ENCODE measurements at regions of chr11 and their contacts with region 1.

Region 1: DNA sequence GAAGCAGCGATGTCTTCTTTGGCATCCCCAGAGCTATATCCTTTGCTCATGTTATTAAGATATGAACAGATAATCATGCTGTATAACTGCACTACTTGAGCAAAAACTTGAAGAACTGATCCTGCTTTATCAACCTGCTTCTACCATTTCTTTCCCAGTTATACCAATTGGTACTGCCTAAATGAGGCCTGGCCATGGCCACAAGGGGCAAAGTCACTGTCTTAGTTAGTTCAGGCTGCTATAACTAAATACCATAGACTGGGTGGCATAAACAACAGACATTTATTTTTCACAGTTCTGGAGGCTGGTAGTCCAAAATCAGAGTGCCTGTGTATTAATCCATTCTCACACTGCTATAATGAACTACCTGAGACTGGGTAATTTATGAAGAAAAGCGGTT is 37.5 kb downstream of the DEUP1 start:
- DNase-seq: no peak

Region 2: DNA sequence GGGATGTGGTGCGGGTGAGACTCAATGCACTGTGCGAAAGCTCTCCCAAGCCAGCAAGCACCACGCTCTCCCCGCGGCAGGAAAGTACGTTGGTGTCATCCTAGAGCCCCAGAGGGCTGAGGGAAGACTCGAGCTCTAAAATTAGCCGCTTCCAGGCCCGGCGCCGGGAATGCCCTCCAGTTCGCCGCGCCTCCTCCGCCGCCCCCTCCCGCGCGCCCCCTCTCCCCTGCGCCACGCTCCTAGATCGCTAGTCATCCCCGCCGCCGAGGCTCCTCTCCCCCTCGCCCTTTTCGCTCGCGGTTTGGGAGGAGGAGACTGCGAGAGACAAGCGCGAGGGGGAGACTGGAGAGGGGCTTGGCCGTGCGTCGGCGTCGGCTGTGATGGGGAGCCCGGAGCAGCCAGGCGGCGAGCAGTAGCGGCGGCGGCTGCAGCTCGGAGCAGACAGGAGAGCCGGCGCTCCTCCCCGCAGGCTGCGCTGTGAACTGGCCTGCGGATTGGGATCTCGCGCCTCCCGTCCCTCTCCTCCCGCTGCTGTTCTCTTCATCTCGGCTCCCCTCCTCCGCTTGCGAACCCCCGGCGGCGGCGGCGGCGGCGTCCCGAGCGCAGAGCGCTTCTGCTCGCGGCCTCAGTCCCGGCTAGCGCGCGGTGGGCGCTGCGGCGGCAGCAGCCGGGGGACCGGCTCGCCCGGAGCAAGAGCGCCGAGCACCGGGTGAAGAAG is 1143.5 kb before region 1 on chr11 and contains the start of gene FAT3:
- intact Hi-C with region 1: loop called in 1 of 2 experiments (anchors 5 kb)
- DNase-seq: peak; percentile 85
- total RNA-seq, gene FAT3: 38.6 to 40.5 TPM

Region 3: GRCh38 chr11:93248602-93249001 is 119.4 kb before region 1 on chr11:
- intact Hi-C with region 1: no loop called
- DNase-seq: no peak

Measured in posterior vena cava (tissue), 2 donors.